Left ventricle myocardium superior (tissue), 1 donor: ENCODE measurements at regions of chrX and their contacts with region 1.

Region 1: GRCh38 chrX:136920001-136920400 is 39.5 kb upstream of the RBMX start:
- DNase-seq: no peak
- ATAC-seq: peak; percentile 36

Region 2: DNA sequence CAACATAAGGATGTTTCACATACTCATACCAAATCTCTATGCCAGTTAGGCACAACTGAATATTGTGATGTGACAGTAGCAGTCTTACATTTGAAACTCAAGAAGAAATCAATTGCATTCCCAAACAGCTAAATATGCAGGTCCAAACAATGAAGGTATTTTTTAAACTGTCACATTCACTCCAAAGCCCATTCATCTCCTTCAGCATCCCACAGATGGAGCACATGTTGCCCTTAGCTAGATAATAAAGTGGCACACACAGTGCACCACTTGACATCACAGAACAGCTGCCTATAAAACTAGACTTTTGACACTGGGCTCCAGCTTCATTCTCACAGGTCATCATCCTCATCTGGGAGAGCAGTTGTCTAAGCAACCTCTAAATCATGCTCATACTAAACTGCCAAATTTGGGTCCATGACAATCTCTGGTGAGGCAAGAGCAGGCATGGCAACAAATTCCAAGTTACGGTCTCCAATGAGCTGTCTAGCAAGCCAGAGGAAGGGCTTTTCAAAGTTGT is 113.0 kb before region 1 on chrX:
- intact Hi-C with region 1: no loop called
- DNase-seq: no peak
- ATAC-seq: no peak

Region 3: DNA sequence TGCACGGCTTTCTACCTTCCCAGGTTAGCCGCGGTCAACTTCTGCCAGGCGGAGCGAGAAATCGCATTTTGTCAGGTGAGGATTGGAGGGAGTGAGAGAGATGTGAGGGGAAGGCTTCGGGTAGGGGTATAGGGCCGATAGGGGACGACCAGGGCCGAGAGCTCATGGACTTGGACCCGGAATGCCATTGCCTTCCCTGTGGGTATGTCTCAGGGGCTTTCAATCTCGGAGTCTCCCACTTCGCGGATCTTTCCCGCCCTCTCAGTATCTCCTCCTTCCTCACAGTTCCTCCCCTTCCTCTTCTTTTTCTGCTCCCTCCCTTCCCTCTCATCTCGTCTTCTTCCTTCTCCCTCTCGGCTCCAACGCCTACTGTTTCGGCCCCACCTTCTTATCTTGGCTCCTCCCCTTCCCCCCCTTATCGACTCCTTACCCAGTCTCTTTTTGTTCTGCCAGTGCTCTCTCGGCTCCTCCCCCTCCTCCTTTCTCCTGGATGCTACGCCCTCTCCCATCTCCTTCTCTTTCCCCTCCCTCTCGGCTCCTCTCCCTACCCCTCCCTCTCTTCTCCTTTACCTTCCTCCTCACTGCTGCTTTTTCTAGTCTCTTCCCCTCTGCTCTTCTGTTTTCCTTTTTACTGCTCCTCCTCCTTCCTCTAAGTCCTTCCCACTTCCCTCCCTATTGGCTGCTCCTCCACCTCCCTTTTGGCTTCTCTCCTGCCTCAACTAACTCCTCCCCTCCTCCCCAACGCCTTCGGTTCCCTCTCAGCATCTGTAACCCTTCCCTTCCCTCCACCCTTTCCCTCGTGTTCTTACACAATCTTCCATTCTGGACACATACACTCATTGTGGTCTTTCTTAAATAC is 10.1 kb before region 1 on chrX:
- intact Hi-C with region 1: loop called (anchors 1 kb)
- DNase-seq: peak; percentile 70
- ATAC-seq: peak; percentile 88